Heart left ventricle (tissue), 16 donors: ENCODE measurements at regions of chr12 and their contacts with region 1.

Region 1: GRCh38 chr12:90987520-90987919 is 17.3 kb downstream of the EPYC start:
- DNase-seq: no peak
- ATAC-seq: no peak
- H3K4me3 ChIP-seq: no peak overlapping the region
- H3K27ac ChIP-seq: no peak overlapping the region
- H3K4me1 ChIP-seq: peaks cover 0 to 6% (median 0%) of the 10 kb centered on the region in 12 donors
- H3K27me3 ChIP-seq: no peaks in the 10 kb centered on the region
- CTCF ChIP-seq: peak in 1 of 12 donors; percentile 29
- POLR2A ChIP-seq: no peak

Region 2: DNA sequence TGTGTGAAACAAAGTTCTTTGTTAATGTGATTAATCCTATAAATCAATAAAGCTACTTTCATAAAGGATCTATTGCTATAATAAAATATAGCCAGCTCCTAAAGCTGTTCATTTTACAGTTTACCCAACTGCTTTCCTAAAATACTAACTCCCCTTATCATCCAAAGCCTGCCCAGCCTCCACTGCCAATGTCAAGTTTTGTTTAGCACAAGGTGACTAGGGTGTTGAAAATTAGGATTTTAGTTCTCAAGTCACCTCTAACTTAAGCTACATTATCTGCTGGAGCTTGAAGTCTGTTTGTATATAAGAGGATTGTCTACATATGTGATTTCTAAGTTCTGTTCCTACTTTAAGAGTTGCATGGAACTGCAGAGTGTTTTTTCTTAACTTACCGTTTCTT is 118.9 kb before region 1 on chr12:
- intact Hi-C with region 1: no loop called
- DNase-seq: no peak
- ATAC-seq: peak in 1 of 4 donors; percentile 42
- H3K4me3 ChIP-seq: no peak overlapping the region
- H3K27ac ChIP-seq: no peak overlapping the region
- H3K4me1 ChIP-seq: no peaks in the 10 kb centered on the region
- H3K27me3 ChIP-seq: no peaks in the 10 kb centered on the region
- CTCF ChIP-seq: no peak
- POLR2A ChIP-seq: no peak

Region 3: GRCh38 chr12:91109148-91109564 is 121.6 kb after region 1 on chr12:
- intact Hi-C with region 1: loop called in 2 of 10 experiments (anchors 5 to 10 kb)
- DNase-seq: peak; percentile 50 to 78 (median 63)
- ATAC-seq: peak; percentile 69 to 83 (median 79)
- H3K4me3 ChIP-seq: peak overlapping the region in 9 of 12 donors; percentile 18 to 64 (median 44)
- H3K27ac ChIP-seq: peak overlapping the region in 8 of 12 donors; percentile 6 to 77 (median 52)
- H3K4me1 ChIP-seq: peaks cover 0 to 2% (median 0%) of the 10 kb centered on the region in 12 donors
- H3K27me3 ChIP-seq: no peaks in the 10 kb centered on the region
- CTCF ChIP-seq: peak; percentile 33 to 85 (median 66)
- POLR2A ChIP-seq: no peak